Caco-2 (cell line): ENCODE measurements at regions of chr3 and their contacts with region 1.

Region 1: DNA sequence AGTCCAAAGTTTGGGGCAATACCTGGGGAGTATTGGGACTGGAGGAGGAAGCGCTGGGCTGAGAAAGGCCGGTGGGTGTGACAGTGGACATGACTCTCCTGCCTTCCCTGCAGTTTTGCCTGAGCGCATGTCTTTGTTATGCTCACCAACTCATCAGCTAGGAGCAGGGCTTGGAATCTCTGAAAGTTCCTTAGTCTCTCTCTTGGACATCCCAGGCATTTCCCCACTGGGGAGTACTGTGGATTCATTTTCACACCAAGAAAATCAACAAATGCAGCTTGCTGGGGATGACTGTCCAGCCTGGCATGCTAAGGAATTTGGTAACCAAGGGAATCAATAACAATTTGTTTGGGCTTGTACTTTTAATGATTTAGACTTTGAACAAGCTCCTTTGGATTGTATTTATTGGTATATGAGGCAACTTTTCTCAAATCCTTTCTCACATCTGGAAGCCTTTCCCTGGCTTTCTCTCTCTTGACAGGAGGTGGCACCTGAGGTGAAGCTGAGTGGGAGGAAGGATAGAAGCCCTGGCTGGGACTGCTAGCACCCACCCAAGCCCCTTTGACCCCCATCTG is 48.5 kb upstream of the CHST2 start:
- DNase-seq: peak in 1 of 2 experiments; percentile 9
- H3K4me3 ChIP-seq: no peak overlapping the region
- H3K4me3 Mint-ChIP-seq: no peak overlapping the region
- H3K27ac Mint-ChIP-seq: no peak overlapping the region
- H3K4me1 ChIP-seq: no peaks in the 10 kb centered on the region
- H3K4me1 Mint-ChIP-seq: peaks cover 6% of the 10 kb centered on the region
- H3K27me3 ChIP-seq: no peaks in the 10 kb centered on the region
- H3K27me3 Mint-ChIP-seq: no peaks in the 10 kb centered on the region
- CTCF ChIP-seq: peak in 1 of 2 experiments; percentile 4

Region 2: DNA sequence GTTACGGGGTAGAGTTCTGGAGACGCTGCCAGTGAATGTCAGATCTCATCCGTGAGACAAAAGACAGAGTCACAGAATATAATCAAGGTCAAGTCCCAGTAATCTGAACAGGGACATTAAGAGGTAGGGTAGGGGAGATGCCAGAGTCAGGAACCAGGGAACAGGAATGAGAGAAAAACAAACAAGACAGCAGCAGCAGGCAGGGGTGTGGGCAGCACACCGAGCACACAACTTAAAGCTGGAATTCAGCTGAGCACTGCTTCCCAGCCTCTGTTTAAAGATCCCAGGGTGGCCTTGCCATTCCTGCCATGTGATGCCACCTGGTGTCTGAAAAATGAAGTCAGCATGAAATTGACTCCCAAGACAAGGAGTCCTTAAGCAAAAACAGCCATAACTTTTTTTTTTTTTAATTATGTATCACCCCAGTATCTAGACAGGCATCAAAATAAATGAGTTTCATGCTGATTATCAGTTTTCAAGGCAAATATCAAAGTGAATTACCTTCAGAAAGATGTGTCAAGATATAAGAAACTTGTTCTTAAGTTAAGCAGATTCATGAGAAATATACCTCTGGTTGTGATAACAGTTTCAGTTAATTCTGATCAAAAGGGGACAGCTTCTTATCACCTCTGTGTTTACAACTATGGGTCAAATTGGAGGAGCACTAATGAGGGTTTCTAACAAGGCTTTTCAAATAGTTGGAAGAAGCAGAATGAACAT is 573.5 kb after region 1 on chr3:
- CTCF ChIA-PET with region 1: no interaction called
- POLR2A ChIA-PET with region 1: no interaction called
- intact Hi-C with region 1: loop called (anchors 10 kb)
- DNase-seq: peak; percentile 44 to 51
- H3K4me3 ChIP-seq: no peak overlapping the region
- H3K4me3 Mint-ChIP-seq: no peak overlapping the region
- H3K27ac Mint-ChIP-seq: no peak overlapping the region
- H3K4me1 ChIP-seq: no peaks in the 10 kb centered on the region
- H3K4me1 Mint-ChIP-seq: peaks cover 6% of the 10 kb centered on the region
- H3K27me3 ChIP-seq: no peaks in the 10 kb centered on the region
- H3K27me3 Mint-ChIP-seq: peaks cover 3% of the 10 kb centered on the region
- CTCF ChIP-seq: peak; percentile 27 to 49

Region 3: DNA sequence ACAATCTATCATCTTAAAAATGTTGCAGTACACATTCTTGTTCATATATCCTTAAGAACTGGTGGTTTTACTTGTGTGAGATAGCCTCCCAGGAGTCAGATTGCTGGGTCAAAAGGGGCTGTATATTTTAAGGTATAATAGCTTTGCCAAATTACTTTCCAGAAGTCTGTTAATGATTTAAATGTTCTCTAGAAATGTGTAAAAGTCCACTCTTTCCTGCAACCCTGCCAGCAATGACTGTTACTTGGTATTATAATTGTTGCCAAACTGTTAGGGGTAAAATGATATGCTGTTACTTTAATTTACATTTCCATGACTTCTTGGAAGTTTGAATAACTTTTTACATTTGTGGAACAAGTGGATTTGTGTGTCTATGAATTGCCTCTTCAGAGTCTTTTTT is 606.4 kb after region 1 on chr3:
- CTCF ChIA-PET with region 1: no interaction called
- POLR2A ChIA-PET with region 1: no interaction called
- intact Hi-C with region 1: loop called (anchors 5 kb)
- DNase-seq: no peak
- H3K4me3 ChIP-seq: no peak overlapping the region
- H3K4me3 Mint-ChIP-seq: no peak overlapping the region
- H3K27ac Mint-ChIP-seq: no peak overlapping the region
- H3K4me1 ChIP-seq: no peaks in the 10 kb centered on the region
- H3K4me1 Mint-ChIP-seq: no peaks in the 10 kb centered on the region
- H3K27me3 ChIP-seq: no peaks in the 10 kb centered on the region
- H3K27me3 Mint-ChIP-seq: peaks cover 13% of the 10 kb centered on the region
- CTCF ChIP-seq: no peak